CD8-positive, alpha-beta T cell (primary cell): ENCODE measurements at regions of chr1 and their contacts with region 1.

Region 1: DNA sequence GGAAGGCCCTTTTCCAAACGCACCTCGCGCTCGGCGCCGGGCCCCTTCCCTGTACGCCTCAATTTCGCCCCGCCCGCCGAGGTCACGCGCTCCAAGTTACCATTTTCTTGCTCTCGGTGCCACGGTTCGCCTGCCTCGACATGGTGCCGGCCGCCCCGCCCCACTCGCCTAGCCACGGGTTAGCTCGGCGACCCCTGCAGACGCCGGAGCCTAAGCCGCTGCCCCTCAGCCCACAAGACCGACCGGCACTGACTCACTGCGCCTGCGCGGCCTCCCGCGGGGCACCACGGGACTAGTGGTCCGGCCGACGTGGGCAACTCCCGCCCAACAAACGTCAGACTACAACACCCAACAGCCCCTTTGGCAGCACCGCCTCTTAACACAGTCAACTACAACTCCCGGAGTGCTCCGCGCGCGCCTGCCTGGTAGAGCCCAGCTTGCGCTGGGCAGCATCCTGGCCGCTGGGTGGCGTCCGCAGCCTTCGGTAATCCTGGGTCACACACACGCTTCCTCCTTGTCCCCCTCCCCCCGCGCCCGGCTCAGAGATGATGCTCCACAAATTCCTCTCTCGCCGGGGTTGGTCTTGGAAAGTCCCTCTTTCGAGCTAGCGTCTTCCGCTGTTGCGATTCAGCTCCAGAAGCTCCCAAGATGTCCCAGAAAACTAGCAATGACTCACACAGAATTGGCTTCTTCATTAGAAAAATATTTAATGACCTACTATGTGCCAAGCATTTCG is at the start of gene TRAPPC3:
- DNase-seq: peak; percentile 98 to 100 (median 99)
- ATAC-seq: peak; percentile 90
- H3K4me3 ChIP-seq: peak within 1 kb of the TSS; percentile 73 to 84
- H3K4me3 Mint-ChIP-seq: peak within 1 kb of the TSS; percentile 99
- H3K27ac ChIP-seq: peak within 1 kb of the TSS; percentile 69 to 94
- H3K27ac Mint-ChIP-seq: peak within 1 kb of the TSS; percentile 100
- H3K4me1 ChIP-seq: peaks cover 51% of the 10 kb centered on the region
- H3K4me1 Mint-ChIP-seq: peaks cover 73% of the 10 kb centered on the region
- H3K27me3 ChIP-seq: no peaks in the 10 kb centered on the region
- H3K27me3 Mint-ChIP-seq: no peaks in the 10 kb centered on the region
- CTCF ChIP-seq: peak; percentile 73
- total RNA-seq, gene TRAPPC3: 18.4 to 21.6 TPM

Region 2: DNA sequence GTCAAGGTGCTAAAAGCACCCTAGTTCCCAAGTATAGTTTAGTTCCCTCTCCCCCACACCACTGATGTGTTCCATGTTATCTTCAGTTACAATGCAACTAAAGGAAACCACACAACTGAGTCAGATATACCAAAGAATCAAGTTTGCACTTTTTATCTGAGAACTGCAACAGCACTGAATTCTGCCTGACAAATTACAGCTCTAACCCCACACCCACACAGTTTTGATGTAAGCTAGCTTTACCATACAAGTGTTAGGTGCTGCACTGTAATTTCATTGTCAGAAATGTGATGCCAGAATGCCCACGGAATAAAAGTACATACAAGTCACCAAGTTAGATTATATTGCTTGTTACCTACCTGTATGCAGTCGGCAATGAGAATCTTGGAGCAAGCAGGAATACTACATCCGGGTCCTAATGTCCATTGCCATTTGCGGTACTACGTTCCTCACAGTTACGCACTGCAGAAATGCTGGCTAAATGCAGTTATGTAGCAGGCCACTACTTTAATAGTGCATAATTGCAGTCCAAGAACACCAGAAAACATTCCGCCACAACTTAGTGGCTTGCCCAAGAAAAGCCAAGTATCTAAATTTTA is 968.5 kb before region 1 on chr1:
- CTCF ChIA-PET with region 1: no interaction called
- POLR2A ChIA-PET with region 1: no interaction called
- intact Hi-C with region 1: loop called in 1 of 2 experiments (anchors 10 kb)
- DNase-seq: no peak
- ATAC-seq: peak; percentile 37
- H3K4me3 ChIP-seq: no peak overlapping the region
- H3K4me3 Mint-ChIP-seq: no peak overlapping the region
- H3K27ac ChIP-seq: no peak overlapping the region
- H3K27ac Mint-ChIP-seq: peak overlapping the region; percentile 1
- H3K4me1 ChIP-seq: peaks cover 69% of the 10 kb centered on the region
- H3K4me1 Mint-ChIP-seq: peaks cover 72% of the 10 kb centered on the region
- H3K27me3 ChIP-seq: no peaks in the 10 kb centered on the region
- H3K27me3 Mint-ChIP-seq: no peaks in the 10 kb centered on the region
- CTCF ChIP-seq: no peak

Region 3: DNA sequence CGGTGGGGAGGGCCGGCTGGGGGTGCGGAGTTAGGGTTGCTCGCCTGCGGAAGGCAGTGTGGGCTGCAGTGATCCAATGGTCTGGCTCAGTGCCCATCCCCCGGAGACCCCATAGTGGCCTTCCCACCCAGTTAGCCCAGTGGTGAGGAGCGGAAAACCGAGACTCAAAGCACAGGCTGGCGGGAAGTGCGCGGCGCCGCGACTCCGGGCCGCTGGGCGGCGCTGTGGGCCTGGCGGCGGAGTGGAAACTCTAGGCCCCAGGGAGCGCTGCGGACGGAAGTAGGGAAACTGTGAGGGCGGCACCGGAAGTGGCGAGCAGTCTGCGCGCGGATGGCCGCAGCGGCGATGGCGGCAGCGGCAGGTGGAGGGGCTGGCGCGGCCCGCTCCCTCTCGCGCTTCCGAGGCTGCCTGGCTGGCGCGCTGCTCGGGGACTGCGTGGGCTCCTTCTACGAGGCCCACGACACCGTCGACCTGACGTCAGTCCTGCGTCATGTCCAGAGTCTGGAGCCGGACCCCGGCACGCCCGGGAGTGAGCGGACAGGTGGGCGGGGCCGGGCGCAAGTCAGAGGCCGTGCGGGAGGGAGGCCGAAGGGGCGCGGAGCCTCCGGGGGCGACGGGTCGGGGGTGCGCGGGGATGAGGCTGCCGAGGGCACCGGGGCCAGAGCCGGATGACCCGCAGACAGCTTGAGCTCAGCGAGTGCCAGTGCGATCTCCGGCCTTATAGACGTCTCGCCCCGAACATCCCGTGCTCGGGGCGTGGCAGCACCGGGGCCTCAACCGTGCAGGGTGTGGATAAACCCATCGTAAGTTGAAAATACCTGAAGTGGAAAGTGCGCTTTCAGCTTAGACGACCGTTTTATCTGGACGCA is 60.6 kb before region 1 on chr1 and contains the start of gene ADPRS:
- CTCF ChIA-PET with region 1: interaction called, 7 read pairs
- POLR2A ChIA-PET with region 1: interaction called, 3 read pairs
- intact Hi-C with region 1: loop called (anchors 1 kb)
- DNase-seq: peak; percentile 81 to 96 (median 91)
- ATAC-seq: peak; percentile 89
- H3K4me3 ChIP-seq: peak within 1 kb of the TSS; percentile 89 to 98
- H3K4me3 Mint-ChIP-seq: peak within 1 kb of the TSS; percentile 90
- H3K27ac ChIP-seq: peak within 1 kb of the TSS; percentile 84 to 95
- H3K27ac Mint-ChIP-seq: peak within 1 kb of the TSS; percentile 94
- H3K4me1 ChIP-seq: peaks cover 24% of the 10 kb centered on the region
- H3K4me1 Mint-ChIP-seq: peaks cover 25% of the 10 kb centered on the region
- H3K27me3 ChIP-seq: peaks cover 5 to 6% of the 10 kb centered on the region in 2 experiments
- H3K27me3 Mint-ChIP-seq: peaks cover 15% of the 10 kb centered on the region
- CTCF ChIP-seq: peak; percentile 98
- total RNA-seq, gene ADPRS: 26.2 to 26.7 TPM

Region 4: DNA sequence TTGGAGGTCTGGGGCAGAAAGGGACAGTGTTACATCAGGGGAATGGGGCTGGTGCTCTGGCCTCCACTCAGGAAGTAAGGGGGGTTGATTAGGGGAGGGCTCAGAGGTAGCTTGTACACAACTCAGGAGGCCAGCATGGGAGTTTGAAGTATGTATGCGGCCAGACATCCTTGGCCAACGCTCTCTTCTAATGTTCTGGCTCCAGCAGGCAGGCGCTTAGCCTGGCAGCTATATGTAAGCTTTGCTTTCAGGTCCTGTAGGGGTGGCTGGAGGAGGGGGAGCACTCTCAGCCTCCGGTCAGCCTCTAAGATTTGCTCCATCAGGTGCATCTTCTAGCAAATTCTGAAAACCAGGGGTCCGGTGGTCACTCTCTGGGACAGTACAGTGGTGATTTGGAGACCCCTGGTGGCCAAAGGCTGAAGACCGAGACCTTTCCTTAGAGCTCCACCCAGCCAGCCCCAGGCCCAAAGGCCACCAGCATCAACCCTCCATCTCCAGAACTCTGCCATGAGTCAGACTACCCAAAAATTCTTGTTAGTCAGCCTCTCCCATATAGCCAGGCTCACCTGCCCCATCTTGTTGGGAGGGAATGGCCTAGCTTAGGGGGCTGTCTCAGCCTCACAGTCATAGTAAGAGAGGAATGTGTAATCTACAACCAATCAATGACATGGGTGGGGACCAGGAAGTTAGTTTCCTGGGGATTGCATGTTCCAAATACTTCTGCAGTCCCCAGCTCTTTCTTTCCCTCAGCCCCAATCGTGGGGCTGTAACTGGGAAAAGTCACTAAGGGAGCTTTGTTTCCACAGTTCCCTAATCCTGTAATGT is 14.7 kb before region 1 on chr1:
- CTCF ChIA-PET with region 1: interaction called, 13 read pairs
- POLR2A ChIA-PET with region 1: interaction called, 5 read pairs
- intact Hi-C with region 1: no loop called
- DNase-seq: peak in 7 of 9 experiments; percentile 34 to 75 (median 52)
- ATAC-seq: peak; percentile 61
- H3K4me3 ChIP-seq: no peak overlapping the region
- H3K4me3 Mint-ChIP-seq: no peak overlapping the region
- H3K27ac ChIP-seq: no peak overlapping the region
- H3K27ac Mint-ChIP-seq: peak overlapping the region; percentile 56
- H3K4me1 ChIP-seq: no peaks in the 10 kb centered on the region
- H3K4me1 Mint-ChIP-seq: no peaks in the 10 kb centered on the region
- H3K27me3 ChIP-seq: no peaks in the 10 kb centered on the region
- H3K27me3 Mint-ChIP-seq: no peaks in the 10 kb centered on the region
- CTCF ChIP-seq: peak; percentile 56

Region 5: DNA sequence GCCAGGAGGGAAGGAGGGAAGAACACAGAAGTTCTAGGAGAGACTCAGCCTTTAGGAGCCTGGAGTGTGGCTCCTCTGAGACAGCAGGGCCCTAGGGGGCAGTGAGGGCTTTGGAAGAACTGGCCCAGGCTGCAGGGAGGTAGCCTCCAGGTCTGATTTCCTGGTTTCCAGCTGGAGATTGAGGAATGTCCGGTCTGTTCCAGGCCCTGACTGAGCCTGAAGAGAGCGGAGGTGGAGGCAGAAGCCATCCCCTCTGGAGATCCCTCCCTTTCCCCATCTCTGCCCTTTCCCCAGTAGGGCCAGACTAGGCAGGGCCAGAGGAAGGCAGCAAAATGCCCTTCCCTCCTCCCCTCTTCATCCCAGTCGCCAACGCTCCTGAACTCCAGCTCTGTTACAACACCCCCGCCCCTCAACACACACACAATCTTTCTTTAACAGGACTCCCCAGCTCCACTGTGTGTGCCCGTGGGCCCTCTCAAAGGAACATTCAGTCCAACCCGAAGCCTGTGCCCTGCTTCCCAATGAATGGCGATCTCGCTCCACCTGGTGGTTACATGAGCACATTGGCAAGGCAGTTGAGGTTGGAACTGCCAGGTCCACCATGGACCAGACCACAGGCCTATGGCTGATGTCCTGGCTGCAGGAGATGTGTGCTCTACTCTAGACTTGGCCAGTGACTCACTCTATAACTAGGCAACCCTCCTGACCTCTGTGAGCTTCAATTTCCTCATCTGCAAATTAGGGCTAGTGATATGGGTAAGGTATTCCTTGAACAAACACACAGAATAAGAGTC is 38.6 kb after region 1 on chr1:
- CTCF ChIA-PET with region 1: interaction called, 245 read pairs
- POLR2A ChIA-PET with region 1: interaction called, 42 read pairs
- intact Hi-C with region 1: loop called (anchors 1 kb)
- DNase-seq: peak; percentile 63 to 91 (median 80)
- ATAC-seq: peak; percentile 100
- H3K4me3 ChIP-seq: no peak overlapping the region
- H3K4me3 Mint-ChIP-seq: no peak overlapping the region
- H3K27ac ChIP-seq: peak overlapping the region in 1 of 2 experiments; percentile 31
- H3K27ac Mint-ChIP-seq: peak overlapping the region; percentile 49
- H3K4me1 ChIP-seq: peaks cover 6% of the 10 kb centered on the region
- H3K4me1 Mint-ChIP-seq: peaks cover 3% of the 10 kb centered on the region
- H3K27me3 ChIP-seq: no peaks in the 10 kb centered on the region
- H3K27me3 Mint-ChIP-seq: no peaks in the 10 kb centered on the region
- CTCF ChIP-seq: peak; percentile 74

Region 6: GRCh38 chr1:36306902-36307456 is 157.6 kb after region 1 on chr1:
- CTCF ChIA-PET with region 1: interaction called, 3 read pairs
- POLR2A ChIA-PET with region 1: interaction called, 5 read pairs
- intact Hi-C with region 1: loop called in 1 of 2 experiments (anchors 1 kb)
- DNase-seq: peak; percentile 84 to 96 (median 93)
- ATAC-seq: peak; percentile 98
- H3K4me3 ChIP-seq: peak overlapping the region; percentile 58 to 63
- H3K4me3 Mint-ChIP-seq: peak overlapping the region; percentile 96
- H3K27ac ChIP-seq: peak overlapping the region; percentile 63
- H3K27ac Mint-ChIP-seq: peak overlapping the region; percentile 94
- H3K4me1 ChIP-seq: peaks cover 13% of the 10 kb centered on the region
- H3K4me1 Mint-ChIP-seq: peaks cover 7% of the 10 kb centered on the region
- H3K27me3 ChIP-seq: no peaks in the 10 kb centered on the region
- H3K27me3 Mint-ChIP-seq: no peaks in the 10 kb centered on the region
- CTCF ChIP-seq: no peak

Region 7: GRCh38 chr1:36420836-36421664 is 271.6 kb after region 1 on chr1:
- CTCF ChIA-PET with region 1: no interaction called
- POLR2A ChIA-PET with region 1: no interaction called
- intact Hi-C with region 1: loop called in 1 of 2 experiments (anchors 1 kb)
- DNase-seq: peak; percentile 82 to 96 (median 89)
- ATAC-seq: peak; percentile 100
- H3K4me3 ChIP-seq: peak overlapping the region in 1 of 2 experiments; percentile 7
- H3K4me3 Mint-ChIP-seq: peak overlapping the region; percentile 64
- H3K27ac ChIP-seq: peak overlapping the region in 1 of 2 experiments; percentile 60
- H3K27ac Mint-ChIP-seq: peak overlapping the region; percentile 88
- H3K4me1 ChIP-seq: peaks cover 18% of the 10 kb centered on the region
- H3K4me1 Mint-ChIP-seq: peaks cover 23% of the 10 kb centered on the region
- H3K27me3 ChIP-seq: no peaks in the 10 kb centered on the region
- H3K27me3 Mint-ChIP-seq: no peaks in the 10 kb centered on the region
- CTCF ChIP-seq: peak; percentile 87